ENCODE measurements at regions of chr6 and their contacts with region 1.

Region 1: DNA sequence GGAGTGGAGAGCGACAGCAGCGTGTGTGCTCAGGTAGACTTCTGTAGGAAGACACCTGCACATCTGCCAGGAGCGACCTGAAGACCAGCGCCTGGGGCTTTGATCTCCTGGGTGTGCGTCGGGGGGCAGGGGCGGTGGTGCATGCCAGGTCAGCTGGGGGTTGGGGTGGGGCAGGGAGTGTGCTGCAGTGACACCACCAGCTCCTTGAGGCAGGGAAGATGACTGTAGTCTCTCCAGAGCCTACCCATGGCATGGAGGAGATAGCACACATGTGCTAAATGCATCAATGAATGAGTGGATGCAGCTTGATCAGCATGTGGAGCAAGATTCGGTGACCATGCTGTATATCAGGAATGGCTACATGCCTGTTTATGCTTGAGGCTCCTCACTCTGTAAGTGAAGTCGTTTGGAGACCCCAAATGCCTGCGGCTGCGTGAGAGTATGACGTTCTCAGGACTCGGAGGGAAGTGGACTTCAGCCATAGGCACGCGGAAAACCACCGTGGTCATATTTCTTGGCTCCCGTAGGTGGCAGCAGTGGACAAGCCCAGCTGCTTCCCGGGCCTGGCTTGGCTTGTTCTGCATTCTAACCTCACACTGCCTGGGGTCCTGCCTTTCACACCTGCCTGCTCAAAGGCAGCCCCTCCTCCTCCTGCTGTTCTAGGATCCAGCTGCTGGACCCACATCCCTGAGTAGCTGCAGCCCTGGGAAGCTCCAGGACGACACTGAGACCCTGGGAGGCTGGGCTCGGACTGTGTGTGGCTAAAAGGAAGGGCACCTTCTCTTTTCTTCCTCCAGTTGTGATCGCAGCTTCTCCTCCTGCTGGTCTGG is 39.4 kb upstream of the KCNK16 start:
- DNase-seq: peak; percentile 84
- H3K4me3 ChIP-seq: peak overlapping the region in 1 of 8 donors; percentile 21
- H3K27ac ChIP-seq: no peak overlapping the region
- H3K4me1 ChIP-seq: peaks cover 0 to 14% (median 6%) of the 10 kb centered on the region in 6 donors
- H3K27me3 ChIP-seq: peaks cover 0 to 13% (median 0%) of the 10 kb centered on the region in 7 donors
- CTCF ChIP-seq: peak in 10 of 11 experiments; percentile 21 to 78 (median 68)
- POLR2A ChIP-seq: no peak

Region 2: GRCh38 chr6:39278296-39278695 is 83.6 kb before region 1 on chr6:
- intact Hi-C with region 1: no loop called
- DNase-seq: no peak
- H3K4me3 ChIP-seq: no peak overlapping the region
- H3K27ac ChIP-seq: no peak overlapping the region
- H3K4me1 ChIP-seq: peaks cover 0 to 11% (median 0%) of the 10 kb centered on the region in 6 donors
- H3K27me3 ChIP-seq: peaks cover 0 to 23% (median 0%) of the 10 kb centered on the region in 7 donors
- CTCF ChIP-seq: no peak
- POLR2A ChIP-seq: no peak

Region 3: GRCh38 chr6:39289490-39289889 is 72.4 kb before region 1 on chr6:
- intact Hi-C with region 1: no loop called
- DNase-seq: no peak
- H3K4me3 ChIP-seq: no peak overlapping the region
- H3K27ac ChIP-seq: no peak overlapping the region
- H3K4me1 ChIP-seq: no peaks in the 10 kb centered on the region
- H3K27me3 ChIP-seq: peaks cover 0 to 16% (median 0%) of the 10 kb centered on the region in 7 donors
- CTCF ChIP-seq: no peak
- POLR2A ChIP-seq: no peak

Region 4: DNA sequence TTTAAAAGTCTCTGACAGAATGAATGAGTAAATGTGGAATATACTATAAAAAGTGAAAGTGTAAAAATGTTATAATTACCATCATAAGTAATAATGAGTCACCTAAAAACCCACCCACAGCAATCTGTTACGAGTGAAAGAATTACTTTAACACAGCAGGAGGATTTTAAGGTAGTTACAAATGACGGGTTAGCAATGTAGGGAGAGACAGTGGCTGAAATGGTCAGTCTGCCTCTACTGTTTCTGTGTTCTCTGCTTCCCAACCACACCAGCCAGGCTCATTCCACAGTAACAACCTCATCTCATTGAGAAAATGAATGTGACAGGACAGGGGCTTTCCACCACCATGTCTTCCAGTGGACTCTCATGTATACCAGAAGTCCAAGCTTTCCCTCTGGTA is 85.0 kb after region 1 on chr6:
- intact Hi-C with region 1: no loop called
- DNase-seq: no peak
- H3K4me3 ChIP-seq: no peak overlapping the region
- H3K27ac ChIP-seq: no peak overlapping the region
- H3K4me1 ChIP-seq: no peaks in the 10 kb centered on the region
- H3K27me3 ChIP-seq: peaks cover 0 to 8% (median 0%) of the 10 kb centered on the region in 7 donors
- CTCF ChIP-seq: no peak
- POLR2A ChIP-seq: no peak

Region 5: GRCh38 chr6:41027799-41028628 is 1666.1 kb after region 1 on chr6:
- intact Hi-C with region 1: loop called (anchors 10 kb)
- DNase-seq: peak; percentile 96
- H3K4me3 ChIP-seq: peak overlapping the region; percentile 45 to 75 (median 54)
- H3K27ac ChIP-seq: peak overlapping the region; percentile 67 to 84 (median 77)
- H3K4me1 ChIP-seq: peaks cover 7 to 26% (median 20%) of the 10 kb centered on the region in 6 donors
- H3K27me3 ChIP-seq: no peaks in the 10 kb centered on the region
- CTCF ChIP-seq: peak; percentile 96 to 100 (median 99)
- POLR2A ChIP-seq: no peak

Measured in spleen (tissue), 13 donors.